ENCODE measurements at regions of chr4 and their contacts with region 1.

Region 1: DNA sequence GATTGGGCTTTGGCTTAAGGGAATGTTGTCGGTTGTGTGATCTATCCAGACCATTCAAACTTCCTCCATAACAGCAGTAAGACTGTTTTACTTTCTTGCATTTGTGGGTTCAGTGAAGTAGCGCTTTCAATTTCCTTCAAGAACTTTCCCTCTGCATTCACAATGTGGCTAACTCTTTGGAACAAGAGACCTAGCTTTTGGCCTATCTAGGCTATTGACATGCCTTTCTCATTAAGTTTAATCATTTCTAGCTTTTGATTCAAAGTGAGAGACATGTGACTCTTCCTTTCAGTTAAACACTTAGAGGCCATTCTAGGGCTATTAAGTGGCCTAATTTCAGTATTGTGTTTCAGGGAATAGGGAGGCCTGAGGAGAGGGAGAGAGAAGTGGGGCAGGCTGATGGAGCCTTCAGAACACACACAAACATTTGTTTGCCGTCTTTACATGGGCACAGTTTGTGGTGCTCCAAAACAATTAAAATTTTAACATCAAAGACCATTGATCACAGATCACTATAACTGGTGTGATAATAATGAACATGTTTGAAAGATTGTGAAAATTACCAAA is 34.1 kb downstream of the ADH5 start:
- DNase-seq: no peak
- H3K4me3 Mint-ChIP-seq: no peak overlapping the region
- H3K27ac Mint-ChIP-seq: peak overlapping the region; percentile 50
- H3K4me1 Mint-ChIP-seq: peaks cover 44% of the 10 kb centered on the region
- H3K27me3 Mint-ChIP-seq: no peaks in the 10 kb centered on the region

Region 2: GRCh38 chr4:98260579-98261290 is 793.8 kb before region 1 on chr4:
- CTCF ChIA-PET with region 1: no interaction called
- intact Hi-C with region 1: loop called (anchors 10 kb)
- DNase-seq: peak; percentile 95
- H3K4me3 Mint-ChIP-seq: peak overlapping the region; percentile 93
- H3K27ac Mint-ChIP-seq: peak overlapping the region; percentile 94
- H3K4me1 Mint-ChIP-seq: peaks cover 43% of the 10 kb centered on the region
- H3K27me3 Mint-ChIP-seq: no peaks in the 10 kb centered on the region

Region 3: DNA sequence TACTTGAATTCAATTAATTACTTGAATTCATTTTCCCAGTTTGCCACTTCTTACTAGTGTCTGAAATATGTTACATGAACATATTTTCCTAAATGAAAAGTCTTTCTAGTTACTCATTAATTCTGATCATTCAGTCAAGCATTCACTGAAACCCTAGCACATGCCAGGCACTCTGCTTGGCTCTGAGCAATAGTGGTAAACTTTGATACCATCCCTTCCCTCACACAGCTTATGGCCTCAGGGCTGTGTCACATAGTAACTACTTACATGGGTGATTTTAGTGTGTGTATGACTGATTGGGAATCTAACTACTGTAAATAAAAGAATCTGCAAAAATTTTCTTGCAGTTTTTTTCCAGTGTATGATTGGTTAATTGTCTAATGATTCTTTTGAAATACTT is 26.3 kb before region 1 on chr4:
- CTCF ChIA-PET with region 1: interaction called, 8 read pairs
- intact Hi-C with region 1: loop called (anchors 2 kb)
- DNase-seq: no peak
- H3K4me3 Mint-ChIP-seq: no peak overlapping the region
- H3K27ac Mint-ChIP-seq: no peak overlapping the region
- H3K4me1 Mint-ChIP-seq: peaks cover 61% of the 10 kb centered on the region
- H3K27me3 Mint-ChIP-seq: no peaks in the 10 kb centered on the region

Region 4: DNA sequence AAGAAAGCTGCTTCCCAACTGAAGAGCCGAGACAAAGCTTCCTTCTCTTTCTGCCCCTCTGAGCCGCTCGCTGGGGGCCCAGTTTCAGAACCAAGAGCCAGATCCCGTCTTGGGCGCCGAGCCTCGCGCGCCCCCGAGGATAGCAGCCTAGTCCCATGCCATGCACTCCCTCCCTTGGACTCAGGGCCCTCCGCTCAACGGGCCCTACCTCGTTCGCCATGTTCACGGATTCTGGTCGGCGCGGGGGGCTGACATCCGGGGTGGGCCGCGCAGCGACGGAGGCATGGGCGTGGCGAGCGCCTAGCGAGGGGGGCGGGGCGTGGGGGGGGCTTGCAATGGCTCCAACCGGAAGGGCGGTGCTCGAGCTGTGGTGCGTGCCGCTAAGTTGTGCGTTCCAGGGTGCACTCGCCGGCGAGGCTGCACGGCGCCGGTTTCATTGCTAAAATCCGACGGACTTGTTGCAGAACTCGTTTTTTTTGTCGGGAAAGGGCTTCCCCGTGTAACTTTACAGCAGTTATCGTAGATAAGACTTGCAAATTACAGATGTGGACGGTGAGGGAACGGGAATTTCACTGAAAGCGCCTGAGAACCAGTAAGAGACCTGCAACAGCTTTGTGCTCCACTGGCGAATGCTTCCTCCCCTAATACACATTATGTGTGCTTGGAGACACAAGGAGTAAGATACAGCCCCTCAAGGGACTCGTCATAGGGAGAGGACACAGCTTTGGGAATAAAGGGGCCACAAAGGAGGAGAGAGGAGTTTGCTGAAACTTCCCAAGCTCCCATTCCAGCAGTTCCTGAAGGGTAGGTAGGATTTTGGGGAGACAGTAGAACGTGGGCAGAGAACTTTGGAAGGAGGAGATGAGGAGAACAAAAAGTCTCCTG is 34.2 kb after region 1 on chr4 and contains the start of gene ADH5:
- CTCF ChIA-PET with region 1: interaction called, 8 read pairs
- intact Hi-C with region 1: loop called (anchors 1 kb)
- DNase-seq: peak; percentile 92
- H3K4me3 Mint-ChIP-seq: peak within 1 kb of the TSS; percentile 96
- H3K27ac Mint-ChIP-seq: peak within 1 kb of the TSS; percentile 95
- H3K4me1 Mint-ChIP-seq: peaks cover 32% of the 10 kb centered on the region
- H3K27me3 Mint-ChIP-seq: no peaks in the 10 kb centered on the region
- total RNA-seq, gene ADH5: 94.3 to 99.9 TPM

Region 5: GRCh38 chr4:99462875-99463464 is 408.5 kb after region 1 on chr4:
- CTCF ChIA-PET with region 1: interaction called, 4 read pairs
- intact Hi-C with region 1: loop called (anchors 2 kb)
- DNase-seq: peak; percentile 70
- H3K4me3 Mint-ChIP-seq: no peak overlapping the region
- H3K27ac Mint-ChIP-seq: no peak overlapping the region
- H3K4me1 Mint-ChIP-seq: no peaks in the 10 kb centered on the region
- H3K27me3 Mint-ChIP-seq: peaks cover 6% of the 10 kb centered on the region

Measured in activated naive CD4-positive, alpha-beta T cell treated with anti-CD3 and anti-CD28 coated beads for 36 hours (primary cell).